Prostate gland (tissue), 2 donors: ENCODE measurements at regions of chr21 and their contacts with region 1.

Region 1: GRCh38 chr21:33127154-33127893 is 57.4 kb downstream of the OLIG1 start:
- DNase-seq: peak; percentile 64
- H3K4me3 ChIP-seq: peak overlapping the region; percentile 8 to 12
- H3K27ac ChIP-seq: no peak overlapping the region
- H3K4me1 ChIP-seq: no peaks in the 10 kb centered on the region
- H3K27me3 ChIP-seq: peaks cover 4% of the 10 kb centered on the region
- CTCF ChIP-seq: peak in 3 of 4 experiments; percentile 60 to 82 (median 68)
- POLR2A ChIP-seq: no peak

Region 2: GRCh38 chr21:31592963-31593560 is 1534.3 kb before region 1 on chr21:
- intact Hi-C with region 1: no loop called
- DNase-seq: no peak
- H3K4me3 ChIP-seq: no peak overlapping the region
- H3K27ac ChIP-seq: no peak overlapping the region
- H3K4me1 ChIP-seq: no peaks in the 10 kb centered on the region
- H3K27me3 ChIP-seq: no peaks in the 10 kb centered on the region
- CTCF ChIP-seq: no peak
- POLR2A ChIP-seq: no peak

Region 3: DNA sequence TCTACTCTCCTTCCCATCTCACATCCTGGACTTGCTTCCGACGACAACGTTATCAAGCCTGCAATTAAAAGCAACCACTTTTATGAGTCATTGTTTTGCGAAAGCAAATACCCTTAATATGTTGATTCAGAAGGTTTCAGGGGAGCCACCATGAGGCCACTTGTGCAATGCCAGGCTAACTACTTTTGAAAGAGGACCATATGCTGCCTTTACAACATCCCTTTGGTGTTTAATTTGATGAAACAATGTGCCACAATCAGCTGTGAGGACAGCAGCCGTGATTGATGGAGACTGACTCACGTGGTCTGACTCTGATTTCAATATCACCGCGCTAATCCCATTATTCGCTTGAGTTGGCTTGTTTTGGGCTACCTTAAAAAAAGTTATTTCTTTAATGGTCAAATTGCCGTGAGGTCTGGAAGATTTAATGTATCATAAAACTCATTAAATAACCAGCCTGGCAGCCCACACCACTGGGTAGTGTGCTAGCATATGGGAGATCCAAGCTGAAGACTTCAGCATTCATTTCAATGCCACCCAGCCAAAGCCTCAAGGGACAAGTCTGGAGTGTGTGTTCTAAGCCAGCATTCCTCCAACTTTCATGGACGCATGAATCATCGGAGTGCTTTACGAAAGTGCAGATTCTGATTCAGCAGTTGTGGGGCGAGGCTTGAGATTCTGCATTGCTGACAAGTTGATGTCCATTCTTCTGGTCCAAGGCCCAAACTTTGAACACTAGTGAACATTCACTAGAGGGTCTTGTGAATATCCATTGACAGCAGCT is 282.5 kb before region 1 on chr21:
- intact Hi-C with region 1: loop called (anchors 10 kb)
- DNase-seq: no peak
- H3K4me3 ChIP-seq: no peak overlapping the region
- H3K27ac ChIP-seq: no peak overlapping the region
- H3K4me1 ChIP-seq: no peaks in the 10 kb centered on the region
- H3K27me3 ChIP-seq: peaks cover 4% of the 10 kb centered on the region
- CTCF ChIP-seq: no peak
- POLR2A ChIP-seq: no peak

Region 4: DNA sequence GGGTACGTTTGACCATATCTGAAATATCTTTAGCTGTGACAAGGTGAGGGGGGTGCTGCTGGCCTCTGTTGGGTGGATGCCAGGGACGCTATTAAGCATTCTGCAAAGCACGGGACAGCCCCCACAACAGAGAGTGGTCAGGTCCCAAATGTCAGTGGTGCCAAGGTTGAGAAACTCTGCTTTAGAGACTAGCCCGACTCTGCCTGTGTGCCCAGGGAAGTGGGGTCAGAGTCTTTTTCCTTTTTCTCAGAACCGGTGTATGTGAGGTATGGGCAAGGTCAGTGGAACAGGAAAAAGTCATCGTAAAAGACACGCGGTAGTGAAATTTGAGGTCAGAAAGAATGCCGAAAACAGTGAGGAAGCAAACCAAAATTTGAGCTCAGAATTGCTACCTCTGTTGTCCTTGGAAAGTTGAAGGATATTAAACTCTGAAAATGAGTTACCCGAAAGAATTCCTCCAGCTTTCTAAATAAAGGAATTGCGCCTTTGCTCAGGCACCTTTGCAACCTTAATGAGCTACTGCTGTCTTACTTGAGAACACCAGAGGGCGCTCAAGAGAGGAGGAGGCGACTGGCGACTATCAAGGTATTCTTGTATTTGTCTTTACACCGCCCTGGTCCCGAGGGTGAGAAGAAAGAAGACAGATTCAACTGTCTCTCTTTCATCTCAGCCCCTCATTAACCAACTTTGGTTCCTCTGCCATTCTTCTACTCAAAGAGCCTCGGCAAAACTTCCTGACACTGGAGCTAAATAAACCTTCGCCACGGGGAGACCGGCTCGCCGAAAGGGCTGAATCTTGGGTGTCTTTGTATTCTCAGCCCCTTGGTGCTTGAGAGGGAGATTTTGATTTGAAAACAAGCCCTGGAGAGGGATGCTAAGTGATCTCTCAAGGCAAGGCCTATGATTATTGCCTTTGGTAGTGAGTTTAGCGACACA is 187.0 kb before region 1 on chr21:
- intact Hi-C with region 1: loop called (anchors 10 kb)
- DNase-seq: peak; percentile 53
- H3K4me3 ChIP-seq: no peak overlapping the region
- H3K27ac ChIP-seq: no peak overlapping the region
- H3K4me1 ChIP-seq: no peaks in the 10 kb centered on the region
- H3K27me3 ChIP-seq: peaks cover 3% of the 10 kb centered on the region
- CTCF ChIP-seq: peak; percentile 49 to 72 (median 68)
- POLR2A ChIP-seq: no peak

Region 5: GRCh38 chr21:33183430-33183829 is 56.1 kb after region 1 on chr21:
- intact Hi-C with region 1: no loop called
- DNase-seq: no peak
- H3K4me3 ChIP-seq: no peak overlapping the region
- H3K27ac ChIP-seq: no peak overlapping the region
- H3K4me1 ChIP-seq: no peaks in the 10 kb centered on the region
- H3K27me3 ChIP-seq: no peaks in the 10 kb centered on the region
- CTCF ChIP-seq: no peak
- POLR2A ChIP-seq: no peak